PC-9 (cell line): ENCODE measurements at regions of chr16 and their contacts with region 1.

Region 1: GRCh38 chr16:48091117-48091516 is 64.7 kb downstream of the ABCC12 start:
- DNase-seq: no peak
- H3K4me3 ChIP-seq: no peak overlapping the region
- H3K27ac ChIP-seq: no peak overlapping the region
- H3K4me1 ChIP-seq: no peaks in the 10 kb centered on the region
- H3K27me3 ChIP-seq: no peaks in the 10 kb centered on the region
- CTCF ChIP-seq: no peak

Region 2: DNA sequence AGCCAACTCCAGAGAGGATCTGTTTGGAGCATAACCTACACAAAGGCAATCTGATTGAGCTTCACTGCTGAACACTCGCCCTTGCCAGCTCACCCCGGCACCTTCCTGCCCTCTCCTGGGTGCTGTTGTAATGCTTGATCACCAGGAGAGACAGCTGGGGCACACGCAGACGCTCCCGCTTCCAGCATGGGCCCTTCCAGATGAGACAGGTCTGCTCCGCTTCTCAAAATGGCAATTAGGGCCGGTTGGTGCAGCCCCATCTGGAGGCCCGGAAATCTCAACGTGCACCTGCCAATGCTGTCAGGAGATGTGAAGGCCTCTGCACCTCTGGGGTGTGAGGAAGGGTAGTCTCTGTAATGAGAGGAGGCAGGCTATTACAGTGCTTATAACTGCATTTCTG is 141.4 kb before region 1 on chr16:
- CTCF ChIA-PET with region 1: no interaction called
- POLR2A ChIA-PET with region 1: no interaction called
- intact Hi-C with region 1: no loop called
- DNase-seq: no peak
- H3K4me3 ChIP-seq: no peak overlapping the region
- H3K27ac ChIP-seq: no peak overlapping the region
- H3K4me1 ChIP-seq: no peaks in the 10 kb centered on the region
- H3K27me3 ChIP-seq: no peaks in the 10 kb centered on the region
- CTCF ChIP-seq: no peak

Region 3: GRCh38 chr16:48064971-48065370 is 26.1 kb before region 1 on chr16:
- CTCF ChIA-PET with region 1: no interaction called
- POLR2A ChIA-PET with region 1: no interaction called
- intact Hi-C with region 1: no loop called
- DNase-seq: peak in 1 of 2 experiments; percentile 35
- H3K4me3 ChIP-seq: no peak overlapping the region
- H3K27ac ChIP-seq: no peak overlapping the region
- H3K4me1 ChIP-seq: no peaks in the 10 kb centered on the region
- H3K27me3 ChIP-seq: no peaks in the 10 kb centered on the region
- CTCF ChIP-seq: no peak

Region 4: DNA sequence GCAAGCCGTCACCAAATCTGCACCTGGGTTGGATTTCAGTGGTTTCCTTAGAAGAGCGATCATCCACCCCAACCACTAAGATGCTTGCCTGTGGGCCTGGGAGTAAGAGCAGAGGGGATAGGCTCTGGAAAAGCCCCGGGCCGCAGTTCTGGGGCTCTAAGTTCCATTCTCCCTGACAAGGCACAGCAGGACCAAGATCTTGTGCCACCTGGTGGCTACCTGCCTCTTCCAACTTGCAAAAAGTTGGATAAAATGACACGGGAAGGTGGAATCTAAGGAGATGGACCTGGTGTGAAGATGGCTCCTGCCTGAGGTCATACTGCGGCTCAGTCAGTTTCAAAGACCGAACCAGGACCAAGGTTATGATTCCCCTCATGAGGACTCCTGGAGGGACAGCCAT is 22.4 kb after region 1 on chr16:
- CTCF ChIA-PET with region 1: no interaction called
- POLR2A ChIA-PET with region 1: no interaction called
- intact Hi-C with region 1: loop called (anchors 2 kb)
- DNase-seq: peak; percentile 19 to 28
- H3K4me3 ChIP-seq: no peak overlapping the region
- H3K27ac ChIP-seq: no peak overlapping the region
- H3K4me1 ChIP-seq: no peaks in the 10 kb centered on the region
- H3K27me3 ChIP-seq: no peaks in the 10 kb centered on the region
- CTCF ChIP-seq: peak; percentile 61